Left lung (tissue), 14 donors: ENCODE measurements at regions of chr11 and their contacts with region 1.

Region 1: DNA sequence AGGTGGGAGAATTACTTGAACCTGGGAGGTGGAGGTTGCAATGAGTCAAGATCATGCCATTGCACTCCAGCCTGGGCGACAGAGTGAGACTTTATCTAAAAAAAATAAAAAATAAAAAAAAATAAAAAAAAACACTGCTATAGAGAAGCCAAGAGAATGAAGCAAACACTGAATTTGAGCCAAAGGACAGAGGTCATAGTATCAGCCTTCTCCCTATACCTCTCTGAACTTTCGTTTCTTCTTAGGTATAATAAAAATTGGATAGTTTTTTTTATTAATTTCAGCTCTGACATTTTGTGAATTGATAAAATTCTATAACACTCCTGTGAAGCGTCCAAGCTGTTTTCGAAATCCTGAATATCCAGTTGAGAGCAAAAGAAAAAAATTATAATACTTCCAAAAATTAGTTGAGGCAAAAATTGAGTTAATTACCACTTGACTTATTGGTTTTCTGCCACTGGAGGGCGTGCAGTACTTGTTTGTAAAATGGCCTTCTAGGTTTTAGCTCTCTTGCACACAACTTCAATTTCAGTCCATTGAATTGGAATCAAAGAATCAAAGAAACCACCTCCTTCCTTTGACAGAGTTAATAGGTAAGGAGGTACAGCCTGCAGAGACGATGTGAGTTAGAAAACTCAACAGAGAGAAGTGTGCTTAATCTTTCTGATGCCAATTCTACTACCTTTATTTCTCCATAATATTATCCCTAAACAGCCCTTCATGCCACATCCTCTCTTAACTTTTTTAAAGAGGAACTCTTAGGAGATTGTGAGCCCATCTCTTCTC is 143.2 kb downstream of the BBOX1 start:
- DNase-seq: peak in 3 of 4 donors; percentile 38 to 74 (median 59)
- ATAC-seq: peak; percentile 76
- H3K4me3 ChIP-seq: no peak overlapping the region
- H3K27ac ChIP-seq: no peak overlapping the region
- H3K4me1 ChIP-seq: no peaks in the 10 kb centered on the region
- H3K27me3 ChIP-seq: peaks cover 12 to 60% of the 10 kb centered on the region in 2 donors
- CTCF ChIP-seq: peak; percentile 38 to 49

Region 2: DNA sequence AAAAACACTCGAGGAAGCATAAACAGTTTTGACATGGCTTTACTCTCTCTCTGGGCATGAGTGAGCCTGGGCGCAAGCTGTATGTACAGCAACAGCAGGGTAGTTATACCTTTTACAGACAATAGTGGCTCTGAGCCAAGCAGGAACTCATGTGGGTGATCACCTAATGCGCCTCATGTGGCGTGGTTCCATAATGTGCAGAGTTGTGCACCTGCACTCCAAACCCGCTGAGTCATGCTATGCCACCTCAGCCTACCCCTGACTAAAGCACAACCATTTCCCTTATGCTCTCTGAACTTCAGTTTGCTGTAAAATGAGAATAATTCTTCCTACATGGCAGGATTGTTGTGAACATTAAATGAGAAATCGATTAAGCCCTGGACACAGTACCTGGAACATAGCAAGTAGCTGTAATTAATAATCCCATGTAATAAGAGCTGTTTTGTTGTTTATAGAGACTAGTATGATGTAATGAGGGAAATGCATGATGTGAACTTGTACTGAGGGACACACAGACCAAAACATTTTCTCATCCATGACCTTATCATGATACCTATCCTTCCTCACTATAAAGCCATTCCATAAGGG is 107.5 kb after region 1 on chr11:
- intact Hi-C with region 1: loop called in 1 of 2 experiments (anchors 5 kb)
- DNase-seq: no peak
- ATAC-seq: no peak
- H3K4me3 ChIP-seq: no peak overlapping the region
- H3K27ac ChIP-seq: no peak overlapping the region
- H3K4me1 ChIP-seq: peaks cover 0 to 3% of the 10 kb centered on the region in 2 donors
- H3K27me3 ChIP-seq: no peaks in the 10 kb centered on the region
- CTCF ChIP-seq: no peak

Region 3: GRCh38 chr11:27485930-27486773 is 302.3 kb after region 1 on chr11:
- intact Hi-C with region 1: loop called in 1 of 2 experiments (anchors 5 kb)
- DNase-seq: peak in 2 of 4 donors; percentile 45 to 72
- ATAC-seq: peak; percentile 74
- H3K4me3 ChIP-seq: no peak overlapping the region
- H3K27ac ChIP-seq: no peak overlapping the region
- H3K4me1 ChIP-seq: no peaks in the 10 kb centered on the region
- H3K27me3 ChIP-seq: no peaks in the 10 kb centered on the region
- CTCF ChIP-seq: peak; percentile 69 to 82